ENCODE measurements at regions of chr12 and their contacts with region 1.

Region 1: GRCh38 chr12:112382232-112382796 is at the start of gene HECTD4:
- DNase-seq: peak; percentile 87 to 97
- H3K4me3 ChIP-seq: peak within 1 kb of the TSS; percentile 51
- H3K4me1 ChIP-seq: peaks cover 17% of the 10 kb centered on the region
- H3K27me3 ChIP-seq: no peaks in the 10 kb centered on the region

Region 2: DNA sequence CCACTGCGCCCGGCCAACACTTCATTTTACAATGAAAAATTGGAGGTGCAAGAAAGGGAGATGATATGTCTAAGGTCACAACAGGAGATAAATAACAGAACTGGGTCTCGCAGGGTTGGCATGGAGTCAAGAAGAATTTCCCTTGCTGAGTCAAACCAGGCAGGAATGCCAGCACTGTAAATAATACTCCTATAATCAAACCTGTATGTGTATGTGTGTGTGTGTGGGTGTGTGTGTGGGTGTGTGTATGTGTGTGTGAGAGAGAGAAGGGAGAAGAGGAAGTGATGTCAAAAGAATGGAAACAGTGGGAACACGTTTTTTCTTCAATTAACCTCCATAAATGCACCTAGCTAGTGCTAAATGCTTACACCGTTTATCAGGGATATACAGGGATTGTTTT is 439.8 kb before region 1 on chr12:
- in situ Hi-C with region 1: loop called (anchors 25 kb)
- DNase-seq: no peak
- H3K4me3 ChIP-seq: no peak overlapping the region
- H3K4me1 ChIP-seq: no peaks in the 10 kb centered on the region
- H3K27me3 ChIP-seq: no peaks in the 10 kb centered on the region

Region 3: GRCh38 chr12:112207397-112207924 is 174.9 kb before region 1 on chr12:
- in situ Hi-C with region 1: loop called (anchors 5 kb)
- DNase-seq: no peak
- H3K4me3 ChIP-seq: no peak overlapping the region
- H3K4me1 ChIP-seq: peaks cover 15% of the 10 kb centered on the region
- H3K27me3 ChIP-seq: no peaks in the 10 kb centered on the region